SK-N-SH (cell line): ENCODE measurements at regions of chr14 and their contacts with region 1.

Region 1: DNA sequence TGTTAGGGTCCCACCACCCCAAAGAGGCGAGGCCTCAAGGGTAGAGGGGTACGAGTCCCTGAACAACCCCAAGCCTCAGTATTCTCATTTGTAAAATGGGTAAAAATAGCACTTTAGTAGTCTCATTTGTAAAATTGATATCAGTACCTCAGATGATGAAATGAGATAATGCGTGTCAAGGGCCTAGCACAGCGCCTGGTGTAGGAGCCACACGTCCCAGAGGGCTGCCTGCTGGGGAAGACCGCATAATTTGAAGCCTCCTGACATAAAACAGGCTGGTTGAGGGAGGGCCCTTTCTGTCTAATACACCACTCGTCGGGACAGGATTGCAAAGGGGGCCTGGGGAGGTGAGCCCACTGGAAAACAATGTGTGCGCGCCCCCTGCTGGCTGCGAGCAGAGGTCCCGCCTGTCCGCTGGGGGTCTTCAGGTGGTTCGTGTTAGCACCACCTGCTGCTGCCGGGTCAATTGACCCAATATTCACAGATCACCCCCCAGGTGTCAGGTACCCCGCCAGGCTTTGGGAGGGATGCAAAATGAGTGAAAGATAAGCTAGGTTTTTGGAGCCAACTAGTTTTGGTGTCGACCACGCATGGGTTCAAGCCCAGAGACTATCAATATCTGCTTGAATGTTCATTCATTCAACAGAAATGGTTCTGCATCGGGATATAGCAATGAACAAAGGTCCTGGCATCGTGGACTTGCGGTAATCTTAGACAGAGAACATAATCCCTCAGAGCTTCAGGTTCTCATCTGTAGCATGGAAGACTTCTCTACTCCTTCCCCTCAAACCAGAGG is 24.7 kb upstream of the IRF2BPL start:
- DNase-seq: peak; percentile 93
- H3K4me3 ChIP-seq: no peak overlapping the region; a peak in 1 of 4 replicates
- H3K27ac ChIP-seq: peak overlapping the region; percentile 10 to 70; a peak in 3 of 4 replicates
- H3K4me1 ChIP-seq: peaks cover 8 to 24% of the 10 kb centered on the region in 2 experiments; a peak in 2 of 4 replicates
- H3K27me3 ChIP-seq: no peaks in the 10 kb centered on the region
- CTCF ChIP-seq: peak; percentile 98
- EP300 ChIP-seq: no peak; a peak in 2 of 4 replicates
- RAD21 ChIP-seq: peak; percentile 96

Region 2: DNA sequence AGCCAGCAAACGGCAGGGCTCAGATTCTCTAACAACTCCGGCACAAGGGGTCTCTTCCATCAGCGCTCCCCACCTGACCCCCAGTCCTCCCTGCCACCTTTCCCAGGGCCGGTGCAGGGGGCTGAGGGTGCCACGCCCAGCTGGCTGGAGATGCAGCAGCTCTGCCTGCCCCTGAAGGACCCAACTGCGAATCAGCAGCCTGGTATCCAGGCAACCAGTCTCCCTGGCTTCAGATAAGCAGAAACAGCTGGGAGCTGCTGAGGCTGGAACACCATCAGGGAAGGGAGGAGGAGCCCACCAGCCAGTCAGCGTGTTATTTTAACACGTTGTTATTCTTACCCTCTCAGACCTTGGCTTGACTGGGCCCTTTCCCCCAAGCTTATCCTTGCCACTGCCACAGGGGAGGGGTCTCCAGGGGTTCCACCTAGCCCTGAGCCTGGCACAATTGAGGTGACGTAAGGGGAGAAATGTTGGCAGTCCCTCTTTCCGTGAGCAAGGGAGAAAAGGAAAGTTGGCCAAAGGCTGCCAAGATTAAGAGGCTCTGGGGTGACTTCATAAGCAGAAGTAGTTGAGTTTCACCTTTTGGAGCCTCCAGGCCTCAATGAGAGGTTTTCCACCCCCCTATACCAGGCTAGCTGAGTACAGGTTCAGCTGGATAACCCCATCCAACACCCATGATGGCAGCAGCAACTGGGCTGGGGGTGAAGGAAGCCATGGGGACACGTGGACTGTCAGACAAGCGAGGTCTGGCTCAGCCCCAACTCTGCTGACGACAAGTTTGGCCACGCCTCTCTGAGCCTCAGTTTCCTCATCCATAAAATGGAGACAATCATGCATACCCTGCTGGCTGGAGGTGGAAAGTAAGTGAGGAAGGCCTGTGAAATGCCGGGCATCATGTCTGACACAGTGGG is 115.8 kb before region 1 on chr14:
- CTCF ChIA-PET with region 1: interaction called, 10 read pairs
- POLR2A ChIA-PET with region 1: no interaction called
- DNase-seq: peak; percentile 93
- H3K4me3 ChIP-seq: no peak overlapping the region
- H3K27ac ChIP-seq: peak overlapping the region; percentile 89 to 97
- H3K4me1 ChIP-seq: peaks cover 23 to 50% of the 10 kb centered on the region in 2 experiments
- H3K27me3 ChIP-seq: no peaks in the 10 kb centered on the region
- CTCF ChIP-seq: no peak
- EP300 ChIP-seq: no peak; a peak in 1 of 4 replicates
- RAD21 ChIP-seq: peak; percentile 35

Region 3: GRCh38 chr14:76956316-76957090 is 96.7 kb before region 1 on chr14:
- CTCF ChIA-PET with region 1: interaction called, 19 read pairs
- POLR2A ChIA-PET with region 1: interaction called, 3 read pairs
- DNase-seq: peak; percentile 91
- H3K4me3 ChIP-seq: peak overlapping the region; percentile 25 to 38; a peak in 3 of 4 replicates
- H3K27ac ChIP-seq: peak overlapping the region; percentile 98 to 99
- H3K4me1 ChIP-seq: peaks cover 68 to 71% of the 10 kb centered on the region in 2 experiments
- H3K27me3 ChIP-seq: no peaks in the 10 kb centered on the region
- CTCF ChIP-seq: 0 out of 2 replicates have a peak, but pooled peaks have one; percentile 8
- EP300 ChIP-seq: peak; percentile 82 to 93; a peak in 3 of 4 replicates
- RAD21 ChIP-seq: 0 out of 2 replicates have a peak, but pooled peaks have one; percentile 9

Region 4: DNA sequence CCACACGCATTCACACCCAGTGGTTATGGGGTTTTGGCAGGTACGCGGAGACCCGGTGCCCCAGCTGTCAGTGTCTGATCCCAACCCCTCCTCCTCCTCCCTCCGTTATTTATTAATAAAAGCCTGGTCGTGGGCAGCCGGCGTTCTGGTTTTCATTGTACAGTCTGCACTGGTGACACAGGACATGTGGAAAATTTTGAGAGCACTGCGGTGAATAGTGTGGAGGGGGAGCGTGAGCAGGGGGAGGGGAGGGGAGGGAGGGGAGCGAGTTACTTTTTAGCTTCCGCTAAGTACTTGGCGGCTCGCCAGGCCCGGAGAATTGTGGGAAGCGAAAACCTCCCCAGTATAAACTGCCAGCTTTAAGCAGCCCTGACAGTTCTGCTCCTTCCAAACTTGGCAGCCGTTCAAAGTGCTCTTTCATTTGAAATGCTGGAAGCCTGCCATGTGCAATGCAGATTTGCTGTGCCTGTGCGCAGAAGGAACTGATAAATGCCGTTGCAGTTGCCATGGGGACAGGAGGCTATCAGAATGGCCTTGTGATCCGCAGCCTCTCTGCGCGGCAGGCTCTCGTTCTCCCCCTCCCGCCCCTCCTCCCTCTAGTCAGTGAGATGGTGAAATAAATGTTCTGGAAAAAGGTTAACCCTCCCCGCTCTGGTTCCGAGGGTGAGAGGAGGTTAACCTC is 13.0 kb before region 1 on chr14:
- CTCF ChIA-PET with region 1: interaction called, 65 read pairs
- POLR2A ChIA-PET with region 1: interaction called, 3 read pairs
- DNase-seq: peak; percentile 86
- H3K4me3 ChIP-seq: peak overlapping the region; percentile 34 to 48
- H3K27ac ChIP-seq: peak overlapping the region; percentile 99 to 100
- H3K4me1 ChIP-seq: peaks cover 76 to 84% of the 10 kb centered on the region in 2 experiments
- H3K27me3 ChIP-seq: no peaks in the 10 kb centered on the region
- CTCF ChIP-seq: no peak
- EP300 ChIP-seq: peak; percentile 91
- RAD21 ChIP-seq: peak; percentile 25

Region 5: GRCh38 chr14:77212943-77213678 is 159.9 kb after region 1 on chr14:
- CTCF ChIA-PET with region 1: no interaction called
- POLR2A ChIA-PET with region 1: no interaction called
- DNase-seq: peak; percentile 82
- H3K4me3 ChIP-seq: peak overlapping the region in 1 of 2 experiments; percentile 16; a peak in 1 of 4 replicates
- H3K27ac ChIP-seq: no peak overlapping the region
- H3K4me1 ChIP-seq: peaks cover 0 to 3% of the 10 kb centered on the region in 2 experiments; a peak in 1 of 4 replicates
- H3K27me3 ChIP-seq: no peaks in the 10 kb centered on the region
- CTCF ChIP-seq: peak; percentile 61
- EP300 ChIP-seq: no peak
- RAD21 ChIP-seq: peak; percentile 77